Vagina (tissue), 2 donors: ENCODE measurements at regions of chr9 and their contacts with region 1.

Region 1: GRCh38 chr9:7415836-7416235 is 383.7 kb downstream of the DMAC1 start:
- DNase-seq: no peak
- H3K4me3 ChIP-seq: no peak overlapping the region
- H3K27ac ChIP-seq: no peak overlapping the region
- H3K4me1 ChIP-seq: no peaks in the 10 kb centered on the region
- H3K27me3 ChIP-seq: no peaks in the 10 kb centered on the region
- CTCF ChIP-seq: no peak
- POLR2A ChIP-seq: no peak

Region 2: GRCh38 chr9:7055201-7055903 is 360.5 kb before region 1 on chr9:
- intact Hi-C with region 1: no loop called
- DNase-seq: no peak
- H3K4me3 ChIP-seq: no peak overlapping the region
- H3K27ac ChIP-seq: no peak overlapping the region
- H3K4me1 ChIP-seq: no peaks in the 10 kb centered on the region
- H3K27me3 ChIP-seq: no peaks in the 10 kb centered on the region
- CTCF ChIP-seq: no peak
- POLR2A ChIP-seq: no peak

Region 3: GRCh38 chr9:7273391-7273974 is 142.4 kb before region 1 on chr9:
- intact Hi-C with region 1: no loop called
- DNase-seq: no peak
- H3K4me3 ChIP-seq: no peak overlapping the region
- H3K27ac ChIP-seq: no peak overlapping the region
- H3K4me1 ChIP-seq: no peaks in the 10 kb centered on the region
- H3K27me3 ChIP-seq: no peaks in the 10 kb centered on the region
- CTCF ChIP-seq: no peak
- POLR2A ChIP-seq: no peak

Region 4: GRCh38 chr9:7402334-7403027 is 13.4 kb before region 1 on chr9:
- intact Hi-C with region 1: loop called (anchors 1 kb)
- DNase-seq: no peak
- H3K4me3 ChIP-seq: no peak overlapping the region
- H3K27ac ChIP-seq: no peak overlapping the region
- H3K4me1 ChIP-seq: peaks cover 11% of the 10 kb centered on the region
- H3K27me3 ChIP-seq: no peaks in the 10 kb centered on the region
- CTCF ChIP-seq: no peak
- POLR2A ChIP-seq: no peak